Activated naive CD4-positive, alpha-beta T cell treated with anti-CD3 and anti-CD28 coated beads for 36 hours (primary cell): ENCODE measurements at regions of chr7 and their contacts with region 1.

Region 1: DNA sequence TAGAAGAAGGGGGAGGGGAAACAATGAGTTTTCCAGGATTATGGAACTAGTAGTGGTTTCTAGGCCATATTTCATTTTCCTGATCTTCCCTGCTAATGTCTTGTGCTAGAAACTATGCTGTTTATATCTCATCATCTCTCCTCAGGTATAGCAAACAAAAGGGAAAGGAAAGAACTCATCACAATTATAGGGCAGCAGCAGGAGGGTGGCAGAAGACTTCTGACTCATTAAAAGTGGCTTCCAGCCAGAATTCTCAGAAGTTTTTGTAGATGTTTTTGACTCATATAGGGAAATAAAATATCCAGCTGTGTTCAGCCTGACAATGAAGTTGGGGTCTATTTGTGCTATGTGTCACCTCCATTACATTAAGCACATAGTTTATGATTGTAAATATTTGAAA is 6.5 kb downstream of the AHR start:
- DNase-seq: peak; percentile 41
- H3K4me3 Mint-ChIP-seq: peak overlapping the region; percentile 34
- H3K27ac Mint-ChIP-seq: peak overlapping the region; percentile 79
- H3K4me1 Mint-ChIP-seq: peaks cover 32% of the 10 kb centered on the region
- H3K27me3 Mint-ChIP-seq: no peaks in the 10 kb centered on the region

Region 2: GRCh38 chr7:16933296-16934279 is 371.3 kb before region 1 on chr7:
- CTCF ChIA-PET with region 1: no interaction called
- intact Hi-C with region 1: loop called (anchors 2 kb)
- DNase-seq: peak; percentile 35
- H3K4me3 Mint-ChIP-seq: no peak overlapping the region
- H3K27ac Mint-ChIP-seq: no peak overlapping the region
- H3K4me1 Mint-ChIP-seq: peaks cover 48% of the 10 kb centered on the region
- H3K27me3 Mint-ChIP-seq: peaks cover 2% of the 10 kb centered on the region

Region 3: GRCh38 chr7:17022920-17023319 is 282.0 kb before region 1 on chr7:
- CTCF ChIA-PET with region 1: no interaction called
- intact Hi-C with region 1: loop called (anchors 1 kb)
- DNase-seq: peak; percentile 49
- H3K4me3 Mint-ChIP-seq: no peak overlapping the region
- H3K27ac Mint-ChIP-seq: no peak overlapping the region
- H3K4me1 Mint-ChIP-seq: peaks cover 10% of the 10 kb centered on the region
- H3K27me3 Mint-ChIP-seq: peaks cover 8% of the 10 kb centered on the region

Region 4: GRCh38 chr7:17255926-17256325 is 49.0 kb before region 1 on chr7:
- CTCF ChIA-PET with region 1: interaction called, 6 read pairs
- intact Hi-C with region 1: loop called (anchors 1 kb)
- DNase-seq: no peak
- H3K4me3 Mint-ChIP-seq: no peak overlapping the region
- H3K27ac Mint-ChIP-seq: no peak overlapping the region
- H3K4me1 Mint-ChIP-seq: peaks cover 6% of the 10 kb centered on the region
- H3K27me3 Mint-ChIP-seq: no peaks in the 10 kb centered on the region

Region 5: GRCh38 chr7:17402628-17403278 is 97.8 kb after region 1 on chr7:
- CTCF ChIA-PET with region 1: interaction called, 3 read pairs
- intact Hi-C with region 1: loop called (anchors 2 kb)
- DNase-seq: no peak
- H3K4me3 Mint-ChIP-seq: peak overlapping the region; percentile 4
- H3K27ac Mint-ChIP-seq: peak overlapping the region; percentile 79
- H3K4me1 Mint-ChIP-seq: peaks cover 26% of the 10 kb centered on the region
- H3K27me3 Mint-ChIP-seq: peaks cover 13% of the 10 kb centered on the region

Region 6: DNA sequence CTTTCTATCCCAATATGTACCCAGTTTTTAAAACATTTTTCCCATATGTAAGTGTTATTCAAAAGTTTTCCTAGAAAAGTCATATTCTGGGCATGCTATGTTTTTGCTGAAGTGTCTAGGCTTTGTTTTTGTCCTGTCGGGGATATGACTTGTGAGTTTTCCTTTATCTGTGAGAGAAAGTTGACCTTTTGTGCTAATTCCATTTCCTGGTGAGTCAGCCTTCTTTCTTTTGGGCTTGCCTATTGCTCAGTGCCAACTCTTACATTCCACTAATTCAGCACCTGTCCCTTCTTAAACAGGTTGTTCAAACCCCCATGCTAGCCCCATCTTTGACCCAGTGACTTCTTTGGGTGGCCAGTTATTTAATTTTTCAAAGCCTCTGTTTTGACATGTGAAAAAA is 139.7 kb after region 1 on chr7:
- CTCF ChIA-PET with region 1: no interaction called
- intact Hi-C with region 1: loop called (anchors 1 kb)
- DNase-seq: no peak
- H3K4me3 Mint-ChIP-seq: no peak overlapping the region
- H3K27ac Mint-ChIP-seq: no peak overlapping the region
- H3K4me1 Mint-ChIP-seq: peaks cover 11% of the 10 kb centered on the region
- H3K27me3 Mint-ChIP-seq: peaks cover 5% of the 10 kb centered on the region